Calu3 (cell line): ENCODE measurements at regions of chr5 and their contacts with region 1.

Region 1: GRCh38 chr5:84255315-84255714 is 129.4 kb downstream of the EDIL3 start:
- DNase-seq: peak; percentile 4
- H3K4me3 Mint-ChIP-seq: no peak overlapping the region
- H3K27ac Mint-ChIP-seq: no peak overlapping the region
- H3K4me1 Mint-ChIP-seq: no peaks in the 10 kb centered on the region
- H3K27me3 Mint-ChIP-seq: no peaks in the 10 kb centered on the region
- CTCF ChIP-seq: no peak

Region 2: GRCh38 chr5:84088995-84089394 is 166.3 kb before region 1 on chr5:
- CTCF ChIA-PET with region 1: no interaction called
- intact Hi-C with region 1: loop called (anchors 10 kb)
- DNase-seq: peak; percentile 49
- H3K4me3 Mint-ChIP-seq: no peak overlapping the region
- H3K27ac Mint-ChIP-seq: no peak overlapping the region
- H3K4me1 Mint-ChIP-seq: no peaks in the 10 kb centered on the region
- H3K27me3 Mint-ChIP-seq: no peaks in the 10 kb centered on the region
- CTCF ChIP-seq: peak; percentile 27

Region 3: GRCh38 chr5:84861306-84861705 is 606.0 kb after region 1 on chr5:
- CTCF ChIA-PET with region 1: no interaction called
- intact Hi-C with region 1: no loop called
- DNase-seq: no peak
- H3K4me3 Mint-ChIP-seq: no peak overlapping the region
- H3K27ac Mint-ChIP-seq: no peak overlapping the region
- H3K4me1 Mint-ChIP-seq: no peaks in the 10 kb centered on the region
- H3K27me3 Mint-ChIP-seq: no peaks in the 10 kb centered on the region
- CTCF ChIP-seq: no peak